Psoas muscle (tissue), 8 donors: ENCODE measurements at regions of chr16 and their contacts with region 1.

Region 1: GRCh38 chr16:89560378-89561141 is at the start of gene RPL13:
- DNase-seq: peak; percentile 96 to 98
- ATAC-seq: peak; percentile 87 to 93 (median 90)
- H3K4me3 ChIP-seq: peak within 1 kb of the TSS; percentile 94
- H3K27ac ChIP-seq: peak within 1 kb of the TSS; percentile 96
- H3K4me1 ChIP-seq: peaks cover 50% of the 10 kb centered on the region
- H3K27me3 ChIP-seq: no peaks in the 10 kb centered on the region
- CTCF ChIP-seq: peak; percentile 2
- total RNA-seq, gene RPL13: 1,039 to 1,769 (median 1,553) TPM

Region 2: DNA sequence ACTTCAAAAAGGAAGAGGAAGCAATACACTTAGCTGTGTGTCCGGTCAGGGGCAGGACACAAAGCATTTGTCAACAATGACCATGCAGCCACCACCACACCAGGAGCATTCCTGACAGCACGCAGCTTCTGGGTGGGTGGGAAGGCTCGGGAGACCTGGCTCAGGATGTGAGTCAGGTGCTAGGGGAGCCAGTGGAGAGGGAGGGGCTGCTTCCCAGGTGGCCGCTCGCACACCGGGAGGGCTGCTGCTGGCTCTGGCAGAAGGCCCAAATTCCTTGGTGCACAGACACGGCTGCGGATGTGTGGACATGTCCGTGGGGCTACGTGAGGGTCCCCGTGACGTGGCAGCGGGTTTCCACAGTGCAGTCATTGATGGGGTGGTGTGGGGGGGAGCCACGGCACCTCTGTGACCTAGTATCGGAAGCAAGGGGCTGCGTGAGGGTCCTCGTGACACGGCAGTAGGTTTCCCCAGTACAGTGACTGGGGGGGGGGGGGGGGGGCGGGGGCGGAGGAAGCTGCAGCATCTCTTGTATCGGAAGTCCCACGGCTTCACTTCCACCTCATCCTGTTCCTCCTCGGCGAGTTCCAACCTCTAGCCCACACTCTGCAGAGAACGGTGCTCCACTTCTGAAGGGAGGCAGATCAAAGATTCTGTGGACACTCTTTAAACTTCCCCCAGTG is 230.2 kb before region 1 on chr16:
- intact Hi-C with region 1: loop called (anchors 5 kb)
- DNase-seq: peak in 1 of 2 donors; percentile 69
- ATAC-seq: peak; percentile 10 to 38 (median 28)
- H3K4me3 ChIP-seq: peak overlapping the region; percentile 25
- H3K27ac ChIP-seq: peak overlapping the region; percentile 96
- H3K4me1 ChIP-seq: peaks cover 78% of the 10 kb centered on the region
- H3K27me3 ChIP-seq: no peaks in the 10 kb centered on the region
- CTCF ChIP-seq: no peak

Region 3: DNA sequence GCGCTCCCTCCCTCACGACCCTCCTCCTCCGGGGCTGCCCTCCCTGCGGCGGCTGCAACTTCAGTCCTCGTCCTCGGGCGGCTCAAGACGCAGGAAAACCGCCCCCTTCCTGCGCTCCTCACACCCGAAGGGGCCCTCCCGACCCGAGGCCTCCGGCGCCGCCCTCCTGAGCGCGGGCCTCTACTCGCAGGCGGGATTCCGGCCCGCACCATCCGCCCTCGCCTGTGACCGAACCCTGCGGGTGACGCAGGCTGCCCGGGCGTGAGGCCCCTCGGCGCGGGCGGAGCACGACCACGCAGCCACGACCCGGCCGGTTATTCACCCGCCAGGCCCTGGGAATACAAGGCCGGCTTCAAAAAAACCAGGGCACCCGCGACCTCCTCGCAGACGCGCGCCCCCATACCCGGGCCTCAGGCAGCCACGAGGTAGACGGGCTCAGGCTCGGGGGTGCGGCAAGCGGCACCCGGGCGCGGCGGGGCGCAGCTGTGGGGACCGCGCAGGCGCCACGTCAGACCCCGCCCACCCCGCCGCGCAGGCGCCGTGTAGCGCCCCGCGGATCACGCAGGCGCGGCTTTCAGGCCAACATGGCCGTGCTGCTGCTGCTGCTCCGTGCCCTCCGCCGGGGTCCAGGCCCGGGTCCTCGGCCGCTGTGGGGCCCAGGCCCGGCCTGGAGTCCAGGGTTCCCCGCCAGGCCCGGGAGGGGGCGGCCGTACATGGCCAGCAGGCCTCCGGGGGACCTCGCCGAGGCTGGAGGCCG is 52.5 kb before region 1 on chr16 and contains the start of gene SPG7:
- intact Hi-C with region 1: no loop called
- DNase-seq: peak; percentile 85 to 92
- ATAC-seq: peak; percentile 95 to 97 (median 96)
- H3K4me3 ChIP-seq: peak within 1 kb of the TSS; percentile 97
- H3K27ac ChIP-seq: peak within 1 kb of the TSS; percentile 95
- H3K4me1 ChIP-seq: peaks cover 23% of the 10 kb centered on the region
- H3K27me3 ChIP-seq: no peaks in the 10 kb centered on the region
- CTCF ChIP-seq: no peak
- total RNA-seq, gene SPG7: 66.8 to 92.3 (median 87.3) TPM

Region 4: DNA sequence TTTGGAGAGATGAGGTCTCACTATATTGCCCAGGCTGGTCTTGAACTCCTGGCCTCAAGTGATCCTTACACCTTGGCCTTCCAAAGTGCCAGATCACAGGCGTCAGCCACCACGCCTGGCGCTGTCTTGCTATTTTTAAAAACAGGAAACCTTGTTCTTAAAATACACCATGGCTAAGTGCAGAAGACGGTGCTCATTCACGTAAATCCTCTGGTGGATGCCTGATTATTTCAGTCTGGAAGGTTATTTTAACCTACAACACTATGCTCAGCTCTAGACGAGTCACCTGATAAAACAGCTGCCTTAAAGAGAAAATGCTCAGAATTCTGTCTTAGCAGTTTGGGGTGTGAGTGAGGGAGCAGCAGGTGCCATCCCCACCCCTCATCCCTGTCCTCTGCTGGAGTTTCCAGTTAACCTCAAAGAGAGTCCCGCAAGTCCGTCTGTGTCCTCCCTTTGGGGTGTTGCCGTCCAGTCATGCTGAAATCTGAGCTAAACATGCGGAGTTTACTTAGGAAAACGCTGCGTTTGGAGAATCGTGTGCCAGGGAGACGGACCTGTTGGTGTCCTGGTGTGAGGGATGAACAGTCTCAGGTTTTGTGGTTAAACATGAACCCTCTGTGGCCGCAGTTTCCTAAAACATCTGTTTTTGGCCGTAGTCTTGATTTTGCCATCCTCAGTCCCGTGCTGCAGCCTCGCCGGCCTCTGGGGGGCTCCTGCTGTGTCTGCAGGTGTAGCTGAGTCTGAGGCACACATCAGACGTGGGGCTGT is 35.2 kb before region 1 on chr16:
- intact Hi-C with region 1: loop called in 1 of 2 experiments (anchors 5 kb)
- DNase-seq: peak in 1 of 2 donors; percentile 83
- ATAC-seq: peak; percentile 89 to 93 (median 91)
- H3K4me3 ChIP-seq: no peak overlapping the region
- H3K27ac ChIP-seq: peak overlapping the region; percentile 83
- H3K4me1 ChIP-seq: peaks cover 8% of the 10 kb centered on the region
- H3K27me3 ChIP-seq: no peaks in the 10 kb centered on the region
- CTCF ChIP-seq: no peak

Region 5: GRCh38 chr16:89670496-89671431 is 110.2 kb after region 1 on chr16:
- intact Hi-C with region 1: no loop called
- DNase-seq: no peak
- ATAC-seq: no peak
- H3K4me3 ChIP-seq: no peak overlapping the region
- H3K27ac ChIP-seq: no peak overlapping the region
- H3K4me1 ChIP-seq: no peaks in the 10 kb centered on the region
- H3K27me3 ChIP-seq: no peaks in the 10 kb centered on the region
- CTCF ChIP-seq: no peak